Activated naive CD4-positive, alpha-beta T cell treated with anti-CD3 and anti-CD28 coated beads for 36 hours (primary cell): ENCODE measurements at regions of chr4 and their contacts with region 1.

Region 1: GRCh38 chr4:11424000-11424399 is 4.7 kb downstream of the HS3ST1 start:
- DNase-seq: peak; percentile 42
- H3K4me3 Mint-ChIP-seq: no peak overlapping the region
- H3K27ac Mint-ChIP-seq: no peak overlapping the region
- H3K4me1 Mint-ChIP-seq: peaks cover 11% of the 10 kb centered on the region
- H3K27me3 Mint-ChIP-seq: peaks cover 21% of the 10 kb centered on the region

Region 2: DNA sequence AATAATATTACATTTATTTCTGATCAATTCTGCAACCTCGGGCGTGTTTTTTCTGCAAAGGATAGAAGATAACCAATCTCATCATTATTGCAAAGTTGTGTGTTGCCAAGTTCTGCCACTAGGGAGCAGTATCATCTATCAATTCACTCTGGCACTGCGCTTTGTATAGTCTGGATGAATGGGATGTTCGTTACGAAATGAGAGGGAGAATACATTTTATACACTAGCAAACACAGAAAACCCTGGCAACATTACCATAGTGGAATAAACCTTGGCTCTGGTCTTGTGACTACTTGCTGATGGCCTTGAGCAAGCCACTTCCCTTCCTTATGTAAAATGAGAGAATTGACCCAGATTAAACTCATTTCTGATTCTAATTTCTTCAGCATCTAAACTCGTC is 869.3 kb before region 1 on chr4:
- CTCF ChIA-PET with region 1: no interaction called
- intact Hi-C with region 1: loop called (anchors 1 kb)
- DNase-seq: peak; percentile 71
- H3K4me3 Mint-ChIP-seq: no peak overlapping the region
- H3K27ac Mint-ChIP-seq: no peak overlapping the region
- H3K4me1 Mint-ChIP-seq: peaks cover 3% of the 10 kb centered on the region
- H3K27me3 Mint-ChIP-seq: peaks cover 11% of the 10 kb centered on the region

Region 3: GRCh38 chr4:10582059-10582686 is 841.8 kb before region 1 on chr4:
- CTCF ChIA-PET with region 1: no interaction called
- intact Hi-C with region 1: loop called (anchors 1 kb)
- DNase-seq: peak; percentile 37
- H3K4me3 Mint-ChIP-seq: no peak overlapping the region
- H3K27ac Mint-ChIP-seq: no peak overlapping the region
- H3K4me1 Mint-ChIP-seq: peaks cover 15% of the 10 kb centered on the region
- H3K27me3 Mint-ChIP-seq: no peaks in the 10 kb centered on the region

Region 4: DNA sequence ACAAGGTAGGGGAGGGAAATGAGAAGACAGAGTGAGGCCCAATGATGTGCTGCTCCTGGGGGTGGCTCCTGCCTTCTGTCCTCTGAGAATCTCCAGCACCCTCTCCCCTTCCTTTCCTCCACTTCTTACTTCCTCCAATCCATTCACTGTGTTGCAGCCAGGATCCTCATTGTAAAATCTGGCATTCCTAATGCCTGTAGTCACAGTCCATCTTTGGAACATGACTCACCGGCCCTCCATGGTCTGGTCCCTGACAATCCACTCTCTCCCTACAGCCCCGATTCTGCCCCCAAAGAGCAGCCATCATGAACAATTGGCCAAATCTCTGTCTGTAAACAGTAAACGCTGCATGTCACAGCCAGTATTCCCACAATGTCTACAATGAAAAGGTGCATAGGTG is 812.3 kb before region 1 on chr4:
- CTCF ChIA-PET with region 1: no interaction called
- intact Hi-C with region 1: no loop called
- DNase-seq: no peak
- H3K4me3 Mint-ChIP-seq: no peak overlapping the region
- H3K27ac Mint-ChIP-seq: no peak overlapping the region
- H3K4me1 Mint-ChIP-seq: no peaks in the 10 kb centered on the region
- H3K27me3 Mint-ChIP-seq: no peaks in the 10 kb centered on the region

Region 5: DNA sequence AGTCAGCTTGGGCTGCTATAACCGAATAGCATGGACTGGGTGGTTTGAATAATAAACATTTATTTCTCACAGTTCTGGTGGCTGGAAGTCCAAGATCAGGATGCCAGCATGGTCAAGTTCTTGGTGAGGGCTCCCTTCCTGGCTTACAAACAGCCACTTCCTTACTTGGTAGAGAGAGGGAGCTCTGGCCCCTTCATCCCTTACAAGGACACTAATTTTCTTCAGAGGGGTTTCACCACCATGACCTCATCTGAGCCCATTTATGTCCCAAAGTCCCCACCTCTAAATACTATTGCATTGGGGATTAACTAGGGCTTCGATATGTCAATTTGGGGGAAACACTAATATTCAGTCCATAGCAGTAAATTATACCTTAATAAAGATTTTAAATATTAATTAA is 801.3 kb before region 1 on chr4:
- CTCF ChIA-PET with region 1: no interaction called
- intact Hi-C with region 1: loop called (anchors 5 kb)
- DNase-seq: no peak
- H3K4me3 Mint-ChIP-seq: no peak overlapping the region
- H3K27ac Mint-ChIP-seq: no peak overlapping the region
- H3K4me1 Mint-ChIP-seq: no peaks in the 10 kb centered on the region
- H3K27me3 Mint-ChIP-seq: peaks cover 2% of the 10 kb centered on the region

Region 6: DNA sequence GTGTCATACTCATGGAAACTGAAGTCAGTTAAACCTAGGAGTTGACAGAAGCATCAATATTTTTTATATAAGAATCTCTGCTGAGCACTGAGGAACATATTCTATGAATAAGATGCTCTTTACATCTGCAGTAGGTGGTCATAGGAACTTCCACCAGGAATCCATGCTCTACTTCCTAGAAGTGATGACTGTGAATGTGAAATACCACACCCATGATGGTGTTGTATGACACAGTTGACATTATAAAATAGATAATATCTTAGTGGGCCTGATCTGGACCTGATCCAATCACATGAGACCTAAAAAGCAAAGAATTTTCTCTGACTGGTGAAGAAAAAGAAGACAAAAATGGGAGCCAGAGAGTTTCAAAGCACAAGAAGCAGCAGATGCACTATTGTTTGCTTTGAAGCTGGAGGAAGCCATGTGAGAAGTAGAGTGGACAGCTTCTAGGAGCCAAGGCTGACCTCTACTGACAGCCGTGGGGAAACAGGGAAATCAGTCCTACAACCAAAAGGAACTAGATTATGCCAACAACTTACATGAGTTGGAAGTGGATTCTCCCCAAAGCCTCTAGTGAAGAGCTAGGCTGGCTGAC is 73.3 kb after region 1 on chr4:
- CTCF ChIA-PET with region 1: no interaction called
- intact Hi-C with region 1: loop called (anchors 5 kb)
- DNase-seq: peak; percentile 24
- H3K4me3 Mint-ChIP-seq: no peak overlapping the region
- H3K27ac Mint-ChIP-seq: no peak overlapping the region
- H3K4me1 Mint-ChIP-seq: peaks cover 2% of the 10 kb centered on the region
- H3K27me3 Mint-ChIP-seq: no peaks in the 10 kb centered on the region